ENCODE measurements at regions of chr18 and their contacts with region 1.

Region 1: DNA sequence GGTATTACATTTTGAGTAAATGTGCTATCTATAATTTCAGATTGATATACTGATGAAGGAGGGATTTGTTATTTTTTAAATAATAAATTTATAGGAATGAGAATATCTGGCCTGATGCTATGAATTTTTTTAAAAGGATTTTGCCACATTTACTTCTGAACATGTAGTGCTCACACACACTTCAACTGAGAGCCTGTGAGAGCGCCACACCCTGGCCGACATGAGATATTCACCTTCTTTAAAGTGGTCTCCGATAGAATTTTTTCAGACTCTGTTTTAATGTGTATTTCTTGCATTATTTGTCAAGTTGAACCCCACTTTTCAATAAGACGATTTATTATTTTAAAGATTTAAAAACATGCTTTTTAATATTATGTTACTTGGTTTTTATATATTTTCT is 813.3 kb downstream of the DCC start:
- DNase-seq: no peak
- ATAC-seq: peak; percentile 57; the same call in 1 of the 3 replicates
- H3K4me3 ChIP-seq: no peak overlapping the region
- H3K27ac ChIP-seq: no peak overlapping the region
- H3K4me1 ChIP-seq: no peaks in the 10 kb centered on the region
- H3K27me3 ChIP-seq: no peaks in the 10 kb centered on the region
- CTCF ChIP-seq: peak; percentile 27 to 49 (median 32); a peak in 2 of 6 replicates
- EP300 ChIP-seq: no peak
- POLR2A ChIP-seq: no peak
- RAD21 ChIP-seq: peak; percentile 16; the same call in 1 of the 2 replicates

Region 2: GRCh38 chr18:53165770-53166169 is 12.5 kb after region 1 on chr18:
- CTCF ChIA-PET with region 1: interaction called, 11 read pairs
- POLR2A ChIA-PET with region 1: no interaction called
- RAD21 ChIA-PET with region 1: no interaction called
- SMC1A ChIA-PET with region 1: no interaction called
- in situ Hi-C with region 1: no loop called
- intact Hi-C with region 1: no loop called
- DNase-seq: no peak
- ATAC-seq: peak; percentile 39
- H3K4me3 ChIP-seq: no peak overlapping the region
- H3K27ac ChIP-seq: no peak overlapping the region
- H3K4me1 ChIP-seq: no peaks in the 10 kb centered on the region
- H3K27me3 ChIP-seq: no peaks in the 10 kb centered on the region
- CTCF ChIP-seq: no peak
- EP300 ChIP-seq: no peak
- POLR2A ChIP-seq: no peak
- RAD21 ChIP-seq: no peak

Region 3: GRCh38 chr18:54232485-54233227 is 1079.4 kb after region 1 on chr18:
- CTCF ChIA-PET with region 1: no interaction called
- POLR2A ChIA-PET with region 1: no interaction called
- RAD21 ChIA-PET with region 1: no interaction called
- SMC1A ChIA-PET with region 1: no interaction called
- in situ Hi-C with region 1: no loop called
- intact Hi-C with region 1: no loop called
- DNase-seq: no peak
- ATAC-seq: no peak
- H3K4me3 ChIP-seq: no peak overlapping the region
- H3K27ac ChIP-seq: no peak overlapping the region
- H3K4me1 ChIP-seq: no peaks in the 10 kb centered on the region
- H3K27me3 ChIP-seq: no peaks in the 10 kb centered on the region
- CTCF ChIP-seq: 0 out of 6 replicates have a peak, but pooled peaks of 1 of the 3 experiments have one; percentile 17
- EP300 ChIP-seq: no peak
- POLR2A ChIP-seq: no peak
- RAD21 ChIP-seq: no peak